OCI-LY7 (cell line): ENCODE measurements at regions of chr10 and their contacts with region 1.

Region 1: GRCh38 chr10:100046021-100046486 is 35.6 kb downstream of the CPN1 start:
- DNase-seq: peak; percentile 92
- H3K4me3 ChIP-seq: no peak overlapping the region
- H3K27ac ChIP-seq: no peak overlapping the region
- H3K4me1 ChIP-seq: peaks cover 49% of the 10 kb centered on the region
- CTCF ChIP-seq: peak; percentile 97

Region 2: DNA sequence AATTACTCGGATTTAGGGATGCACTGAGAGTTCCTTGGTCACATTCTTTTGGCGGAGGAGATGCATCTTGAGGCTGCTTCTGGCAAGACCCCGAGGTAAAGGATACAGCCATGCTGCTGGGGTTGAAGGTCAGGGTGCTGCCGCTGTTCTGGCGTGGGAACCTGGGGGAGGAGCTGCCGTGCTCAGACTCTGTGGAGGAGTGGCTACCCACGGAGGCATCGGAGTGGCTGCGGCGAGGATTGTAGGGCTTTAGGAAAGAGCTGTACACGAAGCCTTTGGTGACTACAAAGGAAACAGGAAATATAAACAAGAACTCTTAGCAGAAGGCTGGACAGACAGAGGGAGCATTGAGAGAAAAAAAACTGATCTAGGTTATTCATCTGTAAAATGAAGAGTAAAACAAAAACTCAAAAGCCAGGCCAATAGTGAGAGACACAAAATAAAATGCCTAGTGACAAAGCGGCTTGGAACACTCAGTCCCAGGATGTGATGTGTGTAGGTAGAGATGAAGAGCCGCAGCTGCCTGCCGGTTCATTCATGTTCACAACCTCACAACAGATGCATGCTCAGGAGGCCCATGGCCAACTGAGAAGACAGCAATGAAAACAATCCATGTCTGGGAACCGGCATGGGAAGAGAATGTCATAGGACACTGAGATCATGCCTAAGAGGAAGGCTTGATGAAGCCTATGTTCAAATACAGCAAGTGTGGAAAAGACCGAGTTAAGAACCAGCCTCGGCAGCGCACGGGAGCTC is 165.8 kb before region 1 on chr10:
- CTCF ChIA-PET with region 1: no interaction called
- POLR2A ChIA-PET with region 1: no interaction called
- intact Hi-C with region 1: no loop called
- DNase-seq: no peak
- H3K4me3 ChIP-seq: no peak overlapping the region
- H3K27ac ChIP-seq: no peak overlapping the region
- H3K4me1 ChIP-seq: no peaks in the 10 kb centered on the region
- CTCF ChIP-seq: no peak

Region 3: DNA sequence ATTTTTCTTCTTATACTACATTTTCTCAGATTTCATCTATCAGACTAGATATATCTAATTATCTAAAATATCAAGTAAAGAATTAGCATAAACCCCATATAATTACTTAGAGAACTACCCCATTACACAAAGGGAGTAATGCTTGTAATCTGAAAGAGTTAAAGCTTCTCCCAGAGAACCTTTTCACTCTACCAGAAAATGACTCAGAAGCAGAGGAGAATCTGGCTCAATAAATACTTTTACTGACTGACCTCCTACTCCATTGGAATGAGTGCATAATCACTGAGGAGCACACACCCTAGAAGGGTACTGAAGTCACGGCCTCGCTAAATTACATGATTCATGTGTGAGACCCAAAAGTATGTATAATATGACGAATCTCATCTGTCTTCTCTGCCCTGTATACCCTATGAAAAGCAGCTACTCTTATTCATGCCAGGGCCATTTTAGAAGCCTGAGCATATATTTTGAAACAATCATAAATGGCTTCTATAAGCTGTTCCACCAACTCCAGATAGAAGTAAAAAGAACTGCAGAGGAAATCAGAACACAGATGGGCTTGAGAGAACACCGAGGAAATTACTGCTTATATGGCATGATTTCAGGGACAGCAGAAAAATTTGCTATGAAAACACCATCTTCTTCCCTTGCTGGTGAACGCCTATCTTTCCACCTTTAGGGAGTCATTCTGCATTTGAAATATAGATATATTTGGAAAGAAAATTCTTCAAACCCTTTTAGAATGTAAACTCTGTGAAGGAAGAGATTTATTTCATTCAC is 69.0 kb before region 1 on chr10:
- CTCF ChIA-PET with region 1: interaction called, 4 read pairs
- POLR2A ChIA-PET with region 1: interaction called, 8 read pairs
- intact Hi-C with region 1: loop called (anchors 1 kb)
- DNase-seq: no peak
- H3K4me3 ChIP-seq: no peak overlapping the region
- H3K27ac ChIP-seq: no peak overlapping the region
- H3K4me1 ChIP-seq: peaks cover 67% of the 10 kb centered on the region
- CTCF ChIP-seq: no peak

Region 4: GRCh38 chr10:100020142-100020885 is 25.7 kb before region 1 on chr10:
- CTCF ChIA-PET with region 1: interaction called, 16 read pairs
- POLR2A ChIA-PET with region 1: interaction called, 10 read pairs
- intact Hi-C with region 1: no loop called
- DNase-seq: peak; percentile 94
- H3K4me3 ChIP-seq: peak overlapping the region; percentile 54
- H3K27ac ChIP-seq: peak overlapping the region; percentile 95
- H3K4me1 ChIP-seq: peaks cover 74% of the 10 kb centered on the region
- CTCF ChIP-seq: peak; percentile 64

Region 5: GRCh38 chr10:100061401-100061800 is 15.3 kb after region 1 on chr10:
- CTCF ChIA-PET with region 1: no interaction called
- POLR2A ChIA-PET with region 1: no interaction called
- intact Hi-C with region 1: no loop called
- DNase-seq: no peak
- H3K4me3 ChIP-seq: no peak overlapping the region
- H3K27ac ChIP-seq: no peak overlapping the region
- H3K4me1 ChIP-seq: no peaks in the 10 kb centered on the region
- CTCF ChIP-seq: no peak

Region 6: DNA sequence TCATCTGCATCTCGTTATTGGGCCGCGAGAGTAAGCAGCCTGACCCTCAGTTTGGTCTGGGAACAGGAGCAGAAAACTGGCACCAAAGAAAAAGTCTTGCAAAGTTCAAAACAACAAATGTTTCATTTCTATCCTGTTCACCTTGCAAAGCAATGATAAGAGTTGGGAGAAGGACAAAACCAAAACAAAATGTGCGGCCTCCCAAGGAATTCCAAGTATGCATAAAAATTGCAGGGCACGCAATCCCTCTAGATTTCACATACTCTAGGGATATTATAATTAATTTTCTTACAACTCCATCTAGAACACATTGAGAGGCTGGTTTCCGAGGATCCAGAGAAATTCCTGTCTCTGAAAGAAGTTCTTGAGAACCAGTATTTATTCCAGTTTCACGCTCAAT is 163.2 kb after region 1 on chr10:
- CTCF ChIA-PET with region 1: no interaction called
- POLR2A ChIA-PET with region 1: no interaction called
- intact Hi-C with region 1: no loop called
- DNase-seq: no peak
- H3K4me3 ChIP-seq: no peak overlapping the region
- H3K27ac ChIP-seq: no peak overlapping the region
- H3K4me1 ChIP-seq: no peaks in the 10 kb centered on the region
- CTCF ChIP-seq: no peak